Left ventricle myocardium superior (tissue), 1 donor: ENCODE measurements at regions of chr10 and their contacts with region 1.

Region 1: GRCh38 chr10:84537447-84537931 is 209.1 kb downstream of the CCSER2 start:
- DNase-seq: peak; percentile 66
- ATAC-seq: peak; percentile 90

Region 2: DNA sequence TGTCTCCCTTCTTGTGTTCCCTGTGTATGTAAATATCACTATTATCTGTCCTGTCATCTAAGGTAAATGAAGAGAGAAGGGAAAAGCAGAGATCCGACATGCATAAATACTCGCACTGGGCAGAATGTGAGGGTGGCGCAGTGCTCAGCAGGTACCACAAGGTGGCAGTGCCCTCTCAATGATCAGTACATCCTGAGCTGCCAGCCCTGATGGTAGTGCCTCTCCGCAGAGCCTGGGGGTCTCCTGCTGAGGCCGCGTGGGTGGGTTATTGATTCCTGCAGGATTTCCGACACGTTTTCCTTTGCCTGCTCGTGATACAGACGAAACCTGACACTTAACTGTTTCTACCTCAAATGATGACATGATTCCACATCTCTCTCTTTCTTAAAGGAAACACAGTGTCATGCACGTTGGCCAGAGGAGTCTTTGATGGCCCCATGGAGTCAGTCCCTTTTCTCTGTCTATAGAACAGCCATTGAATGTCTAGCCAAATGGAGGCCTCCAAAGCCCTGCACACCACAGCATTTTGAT is 272.8 kb before region 1 on chr10:
- intact Hi-C with region 1: loop called (anchors 5 kb)
- DNase-seq: peak; percentile 76
- ATAC-seq: peak; percentile 94

Region 3: GRCh38 chr10:84375011-84375410 is 162.5 kb before region 1 on chr10:
- intact Hi-C with region 1: loop called (anchors 2 kb)
- DNase-seq: no peak
- ATAC-seq: peak; percentile 38

Region 4: DNA sequence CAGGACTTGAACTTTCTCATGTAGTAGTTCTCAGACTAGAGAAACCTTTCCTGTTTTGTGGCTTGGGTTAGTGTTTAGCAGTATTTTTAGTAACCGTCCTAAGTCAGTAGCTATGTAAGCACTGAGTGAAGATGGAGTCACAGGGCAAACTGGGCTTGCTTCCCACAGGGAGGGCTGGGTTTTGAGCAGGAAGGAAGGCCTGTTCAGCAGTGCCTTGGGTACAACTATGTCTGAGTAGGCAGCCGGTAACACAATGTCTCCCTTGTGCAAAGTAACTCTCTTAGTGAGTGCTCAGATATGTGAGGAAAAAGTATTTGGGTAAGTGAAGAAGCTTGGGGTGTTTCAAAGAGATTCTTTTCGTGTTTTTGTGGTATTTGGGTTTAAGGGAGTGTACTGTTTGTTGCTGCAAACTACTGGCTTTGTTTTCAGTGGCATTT is 112.7 kb before region 1 on chr10:
- intact Hi-C with region 1: no loop called
- DNase-seq: peak; percentile 84
- ATAC-seq: peak; percentile 99